ENCODE measurements at regions of chr1 and their contacts with region 1.

Region 1: GRCh38 chr1:30697571-30698376 is 25.6 kb downstream of the MATN1 start:
- DNase-seq: peak; percentile 34 to 65
- H3K4me3 ChIP-seq: no peak overlapping the region
- H3K27ac ChIP-seq: peak overlapping the region in 1 of 2 donors; percentile 15
- H3K4me1 ChIP-seq: peaks cover 0 to 14% (median 9%) of the 10 kb centered on the region in 4 donors
- H3K27me3 ChIP-seq: peaks cover 0 to 18% of the 10 kb centered on the region in 2 donors
- CTCF ChIP-seq: no peak

Region 2: GRCh38 chr1:30111431-30111830 is 586.3 kb before region 1 on chr1:
- intact Hi-C with region 1: no loop called
- DNase-seq: no peak
- H3K4me3 ChIP-seq: no peak overlapping the region
- H3K27ac ChIP-seq: no peak overlapping the region
- H3K4me1 ChIP-seq: no peaks in the 10 kb centered on the region
- H3K27me3 ChIP-seq: peaks cover 0 to 65% of the 10 kb centered on the region in 2 donors
- CTCF ChIP-seq: peak; percentile 24 to 37

Region 3: DNA sequence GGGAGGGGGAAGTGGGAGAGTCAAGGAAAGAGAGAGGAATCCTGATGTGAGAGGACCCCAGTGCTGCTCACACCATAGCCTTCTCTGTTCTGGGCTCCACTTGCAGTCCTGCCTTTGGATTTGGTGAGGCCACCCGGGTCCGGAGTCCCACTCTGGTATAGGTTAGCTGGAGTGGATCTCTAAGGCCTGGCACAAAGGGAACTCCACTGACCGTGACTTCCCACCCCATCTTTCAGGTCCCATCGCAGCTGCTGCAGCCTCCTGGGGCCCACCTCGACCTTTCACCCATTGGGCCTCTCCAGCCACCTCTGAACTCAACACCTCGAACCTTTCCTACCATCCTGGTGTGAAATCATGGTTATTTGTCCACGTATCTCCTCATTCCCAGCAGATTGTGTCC is 298.7 kb before region 1 on chr1:
- intact Hi-C with region 1: loop called (anchors 10 kb)
- DNase-seq: peak in 1 of 2 donors; percentile 21
- H3K4me3 ChIP-seq: no peak overlapping the region
- H3K27ac ChIP-seq: no peak overlapping the region
- H3K4me1 ChIP-seq: no peaks in the 10 kb centered on the region
- H3K27me3 ChIP-seq: no peaks in the 10 kb centered on the region
- CTCF ChIP-seq: no peak